ENCODE measurements at regions of chr4 and their contacts with region 1.

Region 1: DNA sequence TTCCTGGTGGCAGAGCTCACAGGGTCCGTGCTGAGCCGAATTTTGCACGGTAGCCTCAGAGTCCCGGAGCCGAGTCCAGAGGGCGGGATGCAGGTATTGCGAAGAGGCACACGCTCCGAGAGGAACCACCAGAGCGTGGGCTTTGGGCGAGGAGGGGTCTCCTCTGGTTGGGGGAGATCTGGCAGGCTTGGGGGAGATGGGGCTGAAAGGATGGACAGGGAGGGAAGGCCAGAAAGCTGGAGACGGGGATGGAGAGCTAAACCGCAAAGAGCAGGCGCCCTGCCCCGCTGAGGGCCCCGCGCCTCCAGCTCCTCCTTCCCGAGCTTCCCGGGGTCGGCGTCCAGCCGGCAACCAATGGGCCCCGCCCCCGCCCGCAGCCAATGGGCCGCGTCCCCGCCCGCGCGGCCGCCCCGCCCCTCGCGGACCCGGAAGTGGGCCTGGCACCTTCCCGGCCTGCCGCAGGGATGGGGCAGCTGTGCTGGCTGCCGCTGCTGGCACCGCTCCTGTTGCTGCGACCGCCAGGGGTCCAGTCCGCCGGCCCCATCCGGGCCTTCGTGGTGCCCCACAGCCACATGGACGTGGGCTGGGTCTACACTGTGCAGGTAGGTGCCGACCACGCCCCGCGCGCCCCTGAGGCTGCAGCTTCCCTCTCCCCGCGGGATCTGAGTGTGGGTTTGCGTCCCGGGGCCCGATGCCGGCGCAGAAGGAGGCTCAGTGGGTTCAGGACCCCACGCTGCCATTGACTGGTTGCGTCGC is at the start of gene MAN2B2:
- DNase-seq: peak; percentile 66
- ATAC-seq: peak; percentile 95
- H3K4me3 ChIP-seq: peak within 1 kb of the TSS; percentile 87 to 98 (median 88)
- H3K27ac ChIP-seq: peak within 1 kb of the TSS; percentile 30
- H3K4me1 ChIP-seq: peaks cover 21% of the 10 kb centered on the region
- H3K27me3 ChIP-seq: peaks cover 2 to 27% of the 10 kb centered on the region in 2 experiments; a peak in 3 of 5 replicates
- CTCF ChIP-seq: no peak
- EP300 ChIP-seq: no peak
- POLR2A ChIP-seq: peak; percentile 79 to 81
- RAD21 ChIP-seq: peak; percentile 22; the same call in 1 of the 2 replicates
- total RNA-seq, gene MAN2B2: 2.8 and 5.4 TPM in 2 replicates

Region 2: DNA sequence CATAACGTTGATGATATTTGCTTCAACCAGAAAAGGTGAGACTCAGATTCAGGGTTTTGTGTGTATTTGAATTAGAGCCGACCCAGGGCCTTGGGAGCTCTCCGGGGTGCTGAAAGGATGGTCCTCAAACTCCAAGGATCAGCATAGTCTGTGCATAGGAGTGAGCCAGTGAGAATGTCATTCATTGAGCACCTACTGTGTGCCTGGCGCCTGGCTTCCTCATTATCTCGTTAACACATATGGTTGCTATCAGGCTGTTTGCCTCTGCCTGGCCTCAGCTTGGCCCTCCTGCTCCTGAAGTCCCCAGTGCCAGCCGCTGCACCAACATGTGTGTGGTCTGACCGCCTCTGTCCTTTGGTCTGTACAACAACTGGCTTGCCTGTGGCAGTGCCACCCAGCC is 349.5 kb before region 1 on chr4:
- CTCF ChIA-PET with region 1: no interaction called
- POLR2A ChIA-PET with region 1: no interaction called
- in situ Hi-C with region 1: loop called (anchors 25 kb)
- intact Hi-C with region 1: no loop called
- DNase-seq: no peak
- ATAC-seq: peak; percentile 57; the same call in 2 of the 3 replicates
- H3K4me3 ChIP-seq: no peak overlapping the region
- H3K27ac ChIP-seq: no peak overlapping the region
- H3K4me1 ChIP-seq: no peaks in the 10 kb centered on the region
- H3K27me3 ChIP-seq: peaks cover under 1 to 1% of the 10 kb centered on the region in 2 experiments; a peak in 1 of 5 replicates
- CTCF ChIP-seq: no peak
- EP300 ChIP-seq: no peak
- POLR2A ChIP-seq: no peak
- RAD21 ChIP-seq: no peak

Region 3: GRCh38 chr4:6555519-6555918 is 19.4 kb before region 1 on chr4:
- CTCF ChIA-PET with region 1: no interaction called
- POLR2A ChIA-PET with region 1: no interaction called
- in situ Hi-C with region 1: no loop called
- intact Hi-C with region 1: no loop called
- DNase-seq: no peak
- ATAC-seq: no peak
- H3K4me3 ChIP-seq: no peak overlapping the region
- H3K27ac ChIP-seq: no peak overlapping the region
- H3K4me1 ChIP-seq: no peaks in the 10 kb centered on the region
- H3K27me3 ChIP-seq: peaks cover 2 to 45% of the 10 kb centered on the region in 2 experiments; a peak in 3 of 5 replicates
- CTCF ChIP-seq: no peak
- EP300 ChIP-seq: no peak
- POLR2A ChIP-seq: no peak
- RAD21 ChIP-seq: no peak

Region 4: DNA sequence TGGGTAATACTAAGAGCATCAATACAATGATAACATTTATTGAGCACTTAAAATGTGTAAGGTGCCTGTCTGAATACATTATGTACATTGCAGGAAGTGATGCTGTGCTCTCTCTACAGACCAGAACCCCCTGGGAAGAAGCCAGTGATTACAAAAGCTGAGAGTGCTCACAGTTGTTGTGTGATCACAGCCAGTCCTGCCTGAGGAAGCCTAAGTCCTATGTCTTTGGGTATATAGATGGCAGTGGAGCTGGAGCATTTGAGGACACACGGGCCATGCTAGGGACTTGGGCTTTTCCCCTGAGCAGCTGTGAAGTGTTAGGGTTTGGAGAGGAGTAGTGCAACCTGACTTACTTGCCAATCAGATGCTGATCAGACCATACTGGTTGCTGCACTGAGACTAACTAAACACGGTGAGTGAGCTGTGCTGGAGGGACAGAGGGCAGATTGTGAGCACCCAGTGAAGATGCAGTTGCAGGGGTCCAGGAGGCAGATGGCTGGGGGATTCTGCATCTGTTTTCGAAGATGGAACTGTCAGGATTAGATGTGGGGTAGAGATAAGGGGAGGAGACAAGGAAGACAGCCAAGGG is 273.9 kb after region 1 on chr4:
- CTCF ChIA-PET with region 1: no interaction called
- POLR2A ChIA-PET with region 1: no interaction called
- in situ Hi-C with region 1: no loop called
- intact Hi-C with region 1: no loop called
- DNase-seq: no peak
- ATAC-seq: no peak
- H3K4me3 ChIP-seq: no peak overlapping the region
- H3K27ac ChIP-seq: no peak overlapping the region
- H3K4me1 ChIP-seq: no peaks in the 10 kb centered on the region
- H3K27me3 ChIP-seq: no peaks in the 10 kb centered on the region
- CTCF ChIP-seq: no peak
- EP300 ChIP-seq: no peak
- POLR2A ChIP-seq: no peak
- RAD21 ChIP-seq: no peak